Activated CD8-positive, alpha-beta T cell treated with anti-CD3 and anti-CD28 coated beads, Interleukin-2, amount 10 ng/mL, durations not matched to agents 7 days and 5 days (primary cell): ENCODE measurements at regions of chr20 and their contacts with region 1.

Region 1: DNA sequence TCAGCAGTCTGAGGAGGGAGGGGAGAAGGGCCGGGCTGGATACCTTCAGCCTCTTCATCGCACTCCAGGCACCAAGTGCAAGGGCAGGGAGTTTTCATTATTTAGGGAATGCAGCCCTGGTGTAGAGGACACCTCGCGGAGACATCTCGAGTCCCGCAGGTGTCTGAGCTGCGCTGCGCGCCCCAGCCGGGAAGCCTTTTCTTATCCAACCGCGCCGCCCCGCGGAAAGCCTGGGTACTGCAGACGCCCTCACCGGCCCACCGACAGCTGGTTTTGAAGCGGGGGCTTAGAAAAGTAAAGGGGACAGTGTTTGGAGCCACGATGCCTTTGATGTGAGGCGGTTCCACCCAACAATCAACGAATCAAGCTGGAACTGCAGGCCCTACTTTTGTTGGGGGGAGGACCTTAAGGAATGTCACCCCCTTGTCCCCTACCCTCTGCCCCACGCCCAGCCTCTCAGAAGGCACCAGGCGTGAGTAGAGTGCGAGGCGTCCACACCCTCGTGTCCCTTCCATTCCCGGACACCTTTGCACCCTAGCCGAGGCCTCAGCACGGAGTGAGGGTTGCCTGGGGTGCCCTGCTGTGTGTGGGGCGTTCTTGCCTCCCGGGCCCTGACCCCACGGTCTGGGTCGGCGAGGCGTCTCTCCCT is 8.6 kb downstream of the NKX2-2 start:
- DNase-seq: peak; percentile 81
- ATAC-seq: peak; percentile 57
- H3K4me3 Mint-ChIP-seq: peak overlapping the region; percentile 25
- H3K27ac Mint-ChIP-seq: no peak overlapping the region
- H3K4me1 Mint-ChIP-seq: peaks cover 28% of the 10 kb centered on the region
- H3K27me3 Mint-ChIP-seq: peaks cover 41% of the 10 kb centered on the region

Region 2: GRCh38 chr20:20837574-20838021 is 667.7 kb before region 1 on chr20:
- CTCF ChIA-PET with region 1: interaction called, 14 read pairs
- POLR2A ChIA-PET with region 1: no interaction called
- DNase-seq: peak; percentile 58
- ATAC-seq: no peak
- H3K4me3 Mint-ChIP-seq: no peak overlapping the region
- H3K27ac Mint-ChIP-seq: no peak overlapping the region
- H3K4me1 Mint-ChIP-seq: no peaks in the 10 kb centered on the region
- H3K27me3 Mint-ChIP-seq: no peaks in the 10 kb centered on the region

Region 3: GRCh38 chr20:20860078-20860806 is 645.0 kb before region 1 on chr20:
- CTCF ChIA-PET with region 1: interaction called, 30 read pairs
- POLR2A ChIA-PET with region 1: no interaction called
- DNase-seq: peak; percentile 89
- ATAC-seq: peak; percentile 82
- H3K4me3 Mint-ChIP-seq: no peak overlapping the region
- H3K27ac Mint-ChIP-seq: no peak overlapping the region
- H3K4me1 Mint-ChIP-seq: no peaks in the 10 kb centered on the region
- H3K27me3 Mint-ChIP-seq: peaks cover 14% of the 10 kb centered on the region

Region 4: GRCh38 chr20:21099751-21100577 is 405.3 kb before region 1 on chr20:
- CTCF ChIA-PET with region 1: interaction called, 17 read pairs
- POLR2A ChIA-PET with region 1: no interaction called
- DNase-seq: peak; percentile 76
- ATAC-seq: peak; percentile 62
- H3K4me3 Mint-ChIP-seq: peak overlapping the region; percentile 79
- H3K27ac Mint-ChIP-seq: peak overlapping the region; percentile 88
- H3K4me1 Mint-ChIP-seq: peaks cover 59% of the 10 kb centered on the region
- H3K27me3 Mint-ChIP-seq: peaks cover 72% of the 10 kb centered on the region

Region 5: GRCh38 chr20:21395666-21396598 is 109.4 kb before region 1 on chr20:
- CTCF ChIA-PET with region 1: interaction called, 11 read pairs
- POLR2A ChIA-PET with region 1: no interaction called
- DNase-seq: peak; percentile 68
- ATAC-seq: peak; percentile 80
- H3K4me3 Mint-ChIP-seq: peak overlapping the region; percentile 54
- H3K27ac Mint-ChIP-seq: peak overlapping the region; percentile 32
- H3K4me1 Mint-ChIP-seq: peaks cover 31% of the 10 kb centered on the region
- H3K27me3 Mint-ChIP-seq: peaks cover 63% of the 10 kb centered on the region

Region 6: DNA sequence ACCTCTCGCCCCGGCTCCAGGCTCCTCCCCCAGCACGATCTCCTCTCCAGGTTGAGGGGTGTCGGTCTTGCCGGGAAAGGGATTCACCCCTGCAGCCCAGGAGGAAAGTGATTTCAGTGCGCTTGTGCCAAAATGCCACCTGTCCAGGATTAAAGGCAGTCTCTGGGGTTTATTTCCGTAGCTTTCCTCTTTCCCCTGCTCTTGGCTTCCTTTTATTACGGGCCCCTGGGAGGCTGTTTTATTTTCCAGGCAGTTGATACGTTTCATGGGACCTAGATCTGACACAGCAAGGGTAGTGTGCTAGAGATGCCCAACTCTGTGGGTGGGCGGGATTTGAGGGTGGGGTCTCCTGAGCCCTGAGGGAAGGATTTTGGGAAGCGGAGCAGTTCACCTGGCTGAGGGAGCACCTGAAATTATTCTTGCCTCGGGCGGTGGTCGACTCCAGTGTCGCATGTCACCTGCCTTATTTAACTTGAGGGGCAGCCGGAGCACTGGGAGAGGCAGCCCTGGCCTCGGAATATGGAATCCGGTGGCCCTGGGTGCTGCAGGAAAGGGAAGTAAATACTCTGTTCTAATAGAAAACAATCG is 18.1 kb after region 1 on chr20:
- CTCF ChIA-PET with region 1: interaction called, 11 read pairs
- POLR2A ChIA-PET with region 1: no interaction called
- DNase-seq: no peak
- ATAC-seq: no peak
- H3K4me3 Mint-ChIP-seq: peak overlapping the region; percentile 25
- H3K27ac Mint-ChIP-seq: peak overlapping the region; percentile 37
- H3K4me1 Mint-ChIP-seq: peaks cover 1% of the 10 kb centered on the region
- H3K27me3 Mint-ChIP-seq: peaks cover 77% of the 10 kb centered on the region